ENCODE measurements at regions of chr22 and their contacts with region 1.

Region 1: DNA sequence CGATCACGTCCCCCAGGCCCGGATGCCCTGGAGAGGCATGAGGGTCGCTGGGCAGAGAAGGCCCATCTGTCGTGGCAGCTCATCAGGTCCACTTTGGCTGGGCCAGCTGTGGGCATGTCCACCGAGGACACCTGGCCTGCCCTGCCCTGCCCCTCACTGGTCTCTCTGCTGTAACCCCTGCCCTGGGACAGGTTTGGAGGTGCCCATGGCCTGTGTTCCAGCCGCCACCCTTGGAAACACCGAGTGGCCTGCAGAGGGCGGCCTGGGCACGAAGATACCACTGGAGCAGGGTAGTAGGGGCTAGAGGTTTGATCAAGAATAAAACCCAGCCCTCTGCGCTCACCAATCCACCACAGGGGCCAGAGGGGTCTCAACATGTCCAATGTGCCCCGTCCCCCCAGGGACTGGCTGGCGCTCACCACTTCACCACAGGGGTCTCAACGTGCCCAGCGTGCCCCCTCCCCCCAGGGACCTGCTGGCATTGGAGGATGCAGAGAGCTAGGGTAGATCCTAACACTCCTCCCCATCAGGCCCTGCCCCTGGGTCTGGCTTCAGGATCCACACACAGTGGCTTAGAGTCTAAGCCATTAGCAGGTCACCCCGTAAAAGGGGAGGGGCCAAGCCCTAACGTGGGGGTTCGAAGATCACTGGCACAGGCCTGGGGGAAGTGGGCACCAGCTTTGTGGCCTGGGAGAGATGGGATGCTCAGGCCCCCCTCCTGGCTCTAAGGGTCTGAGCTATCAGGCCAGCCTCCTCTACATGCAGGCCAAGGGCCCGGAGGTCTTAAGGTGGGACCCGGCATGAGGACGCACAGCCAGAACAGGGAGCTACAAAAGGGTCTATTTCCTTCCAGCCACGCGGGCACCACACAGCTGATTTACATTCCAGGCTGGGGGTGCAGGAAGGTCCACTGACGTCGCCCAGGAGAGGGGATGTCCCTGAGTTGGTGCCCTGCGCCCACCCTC is 1.3 kb upstream of the HDAC10 start:
- DNase-seq: peak; percentile 66
- H3K4me3 ChIP-seq: no peak overlapping the region
- H3K27ac ChIP-seq: peak overlapping the region in 1 of 2 donors; percentile 62
- H3K4me1 ChIP-seq: peaks cover 12% of the 10 kb centered on the region
- H3K27me3 ChIP-seq: no peaks in the 10 kb centered on the region
- CTCF ChIP-seq: peak; percentile 31 to 84 (median 66)
- POLR2A ChIP-seq: no peak

Region 2: DNA sequence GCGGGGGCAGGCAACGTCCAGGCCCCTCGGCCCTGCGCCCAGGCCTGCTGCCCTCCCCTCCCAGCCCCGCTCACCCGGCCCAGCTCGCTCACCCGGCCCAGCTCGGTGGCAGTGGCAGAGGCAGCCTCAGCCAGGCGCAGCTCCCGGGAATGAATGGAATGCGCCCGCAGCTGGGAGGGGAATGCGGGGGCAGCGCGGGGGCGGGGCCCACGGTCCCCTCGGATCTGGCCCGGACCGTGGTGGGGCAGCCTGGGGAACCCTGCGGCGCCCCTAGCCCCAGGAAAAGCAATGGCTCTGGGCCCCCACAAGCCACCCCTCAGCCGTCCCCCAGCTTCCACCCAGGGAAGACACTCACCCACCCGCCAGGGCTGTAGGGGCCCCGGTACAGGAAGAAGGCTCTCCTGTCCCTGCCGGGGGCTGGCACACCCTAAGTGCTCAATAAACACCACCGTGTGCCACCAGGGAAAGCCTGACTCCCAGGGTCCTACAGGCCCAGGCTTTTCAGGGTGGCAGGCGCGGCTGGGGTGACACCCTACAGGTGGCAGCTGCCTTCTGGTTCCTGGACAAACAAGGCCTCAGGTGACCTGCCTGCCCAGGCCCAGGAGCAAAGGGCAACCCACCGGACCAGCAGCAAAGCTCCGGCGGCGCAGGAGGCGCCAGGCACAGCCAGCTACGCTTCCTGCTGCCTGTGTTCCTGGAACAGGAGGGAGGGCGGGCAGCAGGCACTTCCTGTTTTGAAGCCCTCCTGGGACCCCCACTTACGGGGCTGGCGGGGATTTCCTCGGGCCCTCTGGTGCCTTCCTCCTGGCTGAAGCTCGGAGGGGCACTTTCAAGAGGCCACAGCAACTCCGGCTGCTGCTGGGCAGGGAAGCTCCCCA is 41.3 kb after region 1 on chr22:
- intact Hi-C with region 1: no loop called
- DNase-seq: peak; percentile 71
- H3K4me3 ChIP-seq: peak overlapping the region; percentile 3 to 12
- H3K27ac ChIP-seq: peak overlapping the region; percentile 77 to 81
- H3K4me1 ChIP-seq: peaks cover 40% of the 10 kb centered on the region
- H3K27me3 ChIP-seq: no peaks in the 10 kb centered on the region
- CTCF ChIP-seq: peak in 2 of 4 experiments; percentile 14 to 23
- POLR2A ChIP-seq: no peak

Region 3: GRCh38 chr22:50341977-50342650 is 89.8 kb after region 1 on chr22:
- intact Hi-C with region 1: loop called (anchors 2 kb)
- DNase-seq: peak; percentile 85
- H3K4me3 ChIP-seq: peak overlapping the region; percentile 92 to 99
- H3K27ac ChIP-seq: peak overlapping the region; percentile 76 to 82
- H3K4me1 ChIP-seq: no peaks in the 10 kb centered on the region
- H3K27me3 ChIP-seq: no peaks in the 10 kb centered on the region
- CTCF ChIP-seq: peak; percentile 90 to 97 (median 94)
- POLR2A ChIP-seq: no peak

Measured in prostate gland (tissue), 2 donors.